ENCODE measurements at regions of chr2 and their contacts with region 1.

Region 1: DNA sequence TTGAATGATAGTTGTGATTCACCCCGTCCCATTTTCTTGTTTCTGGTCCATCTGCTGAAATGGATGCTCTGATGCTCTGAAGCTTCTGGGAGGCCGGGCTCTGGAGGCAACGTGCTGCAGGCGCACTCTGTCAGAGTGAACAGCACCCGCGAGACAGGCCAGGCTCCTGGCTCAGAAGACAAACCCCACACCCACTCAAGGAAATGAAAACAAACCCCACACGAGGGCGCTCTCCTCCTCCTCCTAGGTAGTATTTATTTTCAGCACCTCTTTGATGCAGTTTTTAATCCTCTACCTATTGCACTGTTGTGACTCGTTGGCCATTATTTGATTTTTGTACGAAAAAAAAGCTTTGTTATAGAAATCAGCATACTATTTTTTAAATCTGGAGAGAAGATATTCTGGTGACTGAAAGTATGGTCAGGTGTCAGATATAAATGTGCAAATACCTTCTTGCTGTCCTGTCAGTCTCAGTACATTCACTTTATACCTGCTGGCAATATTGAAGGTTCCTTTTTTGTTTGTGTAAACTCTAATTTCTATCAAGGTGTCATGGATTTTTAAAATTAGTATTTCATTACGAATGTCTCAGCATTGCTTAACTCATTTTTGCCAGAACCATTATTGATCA is 10.3 kb upstream of the CHST10 start:
- DNase-seq: peak; percentile 35
- H3K4me3 ChIP-seq: no peak overlapping the region
- H3K27ac ChIP-seq: no peak overlapping the region
- H3K4me1 ChIP-seq: no peaks in the 10 kb centered on the region
- H3K27me3 ChIP-seq: peaks cover 6% of the 10 kb centered on the region
- CTCF ChIP-seq: peak; percentile 27 to 66

Region 2: GRCh38 chr2:100562732-100563720 is 135.3 kb after region 1 on chr2 and contains the start of gene PDCL3:
- CTCF ChIA-PET with region 1: no interaction called
- dilution Hi-C with region 1: no loop called
- in situ Hi-C with region 1: no loop called
- intact Hi-C with region 1: loop called (anchors 5 kb)
- DNase-seq: peak; percentile 99
- H3K4me3 ChIP-seq: peak within 1 kb of the TSS; percentile 82 to 91 (median 89)
- H3K27ac ChIP-seq: peak within 1 kb of the TSS; percentile 89
- H3K4me1 ChIP-seq: no peaks in the 10 kb centered on the region
- H3K27me3 ChIP-seq: no peaks in the 10 kb centered on the region
- CTCF ChIP-seq: peak in 1 of 2 donors; percentile 32
- total RNA-seq, gene PDCL3: 20.8 to 25.7 TPM

Region 3: GRCh38 chr2:100588071-100588786 is 160.5 kb after region 1 on chr2:
- CTCF ChIA-PET with region 1: no interaction called
- dilution Hi-C with region 1: no loop called
- in situ Hi-C with region 1: no loop called
- intact Hi-C with region 1: no loop called
- DNase-seq: peak; percentile 63
- H3K4me3 ChIP-seq: no peak overlapping the region
- H3K27ac ChIP-seq: no peak overlapping the region
- H3K4me1 ChIP-seq: no peaks in the 10 kb centered on the region
- H3K27me3 ChIP-seq: no peaks in the 10 kb centered on the region
- CTCF ChIP-seq: no peak

Region 4: DNA sequence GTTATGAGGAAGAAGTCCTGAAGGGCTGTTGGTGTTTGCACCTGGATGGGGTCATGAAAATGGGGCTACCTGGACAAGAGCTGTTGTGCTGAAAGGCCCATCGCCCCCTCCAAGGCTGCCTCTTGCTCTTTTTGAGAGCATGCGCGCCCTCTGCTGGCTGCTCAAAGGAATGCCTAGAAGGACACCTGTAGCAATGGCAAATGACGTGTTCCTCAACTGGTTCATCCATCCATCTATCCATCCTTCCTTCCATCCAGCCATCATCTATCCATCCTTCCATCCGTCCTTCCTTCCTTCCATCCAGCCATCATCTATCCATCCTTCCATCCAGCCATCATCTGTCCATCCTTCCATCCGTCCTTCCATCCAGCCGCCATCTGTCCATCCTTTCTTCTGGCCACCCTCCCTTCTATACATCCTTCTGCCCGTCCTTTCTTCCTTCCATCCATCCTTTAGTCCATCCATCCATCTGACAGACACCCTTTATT is 557.2 kb after region 1 on chr2:
- CTCF ChIA-PET with region 1: no interaction called
- dilution Hi-C with region 1: no loop called
- in situ Hi-C with region 1: no loop called
- intact Hi-C with region 1: loop called (anchors 10 kb)
- DNase-seq: peak; percentile 47
- H3K4me3 ChIP-seq: no peak overlapping the region
- H3K27ac ChIP-seq: no peak overlapping the region
- H3K4me1 ChIP-seq: no peaks in the 10 kb centered on the region
- H3K27me3 ChIP-seq: no peaks in the 10 kb centered on the region
- CTCF ChIP-seq: peak; percentile 83 to 88

Measured in mammary epithelial cell (primary cell).